ENCODE measurements at regions of chr11 and their contacts with region 1.

Region 1: GRCh38 chr11:6022956-6023355 is 7.6 kb downstream of the OR56A1 start:
- DNase-seq: peak; percentile 9 to 36 (median 29)
- H3K4me3 ChIP-seq: no peak overlapping the region
- H3K4me3 Mint-ChIP-seq: no peak overlapping the region
- H3K27ac ChIP-seq: no peak overlapping the region
- H3K27ac Mint-ChIP-seq: no peak overlapping the region
- H3K4me1 ChIP-seq: no peaks in the 10 kb centered on the region
- H3K4me1 Mint-ChIP-seq: no peaks in the 10 kb centered on the region
- H3K27me3 ChIP-seq: no peaks in the 10 kb centered on the region
- H3K27me3 Mint-ChIP-seq: peaks cover 12 to 27% of the 10 kb centered on the region in 2 donors

Region 2: GRCh38 chr11:5796541-5796940 is 226.4 kb before region 1 on chr11:
- CTCF ChIA-PET with region 1: no interaction called
- POLR2A ChIA-PET with region 1: no interaction called
- intact Hi-C with region 1: no loop called
- DNase-seq: no peak
- H3K4me3 ChIP-seq: no peak overlapping the region
- H3K4me3 Mint-ChIP-seq: no peak overlapping the region
- H3K27ac ChIP-seq: no peak overlapping the region
- H3K27ac Mint-ChIP-seq: no peak overlapping the region
- H3K4me1 ChIP-seq: no peaks in the 10 kb centered on the region
- H3K4me1 Mint-ChIP-seq: no peaks in the 10 kb centered on the region
- H3K27me3 ChIP-seq: no peaks in the 10 kb centered on the region
- H3K27me3 Mint-ChIP-seq: peaks cover 14 to 17% of the 10 kb centered on the region in 2 donors

Region 3: GRCh38 chr11:5910540-5910939 is 112.4 kb before region 1 on chr11:
- CTCF ChIA-PET with region 1: no interaction called
- POLR2A ChIA-PET with region 1: no interaction called
- intact Hi-C with region 1: no loop called
- DNase-seq: no peak
- H3K4me3 ChIP-seq: no peak overlapping the region
- H3K4me3 Mint-ChIP-seq: no peak overlapping the region
- H3K27ac ChIP-seq: no peak overlapping the region
- H3K27ac Mint-ChIP-seq: no peak overlapping the region
- H3K4me1 ChIP-seq: no peaks in the 10 kb centered on the region
- H3K4me1 Mint-ChIP-seq: no peaks in the 10 kb centered on the region
- H3K27me3 ChIP-seq: no peaks in the 10 kb centered on the region
- H3K27me3 Mint-ChIP-seq: peaks cover 10 to 12% of the 10 kb centered on the region in 2 donors

Region 4: GRCh38 chr11:6040874-6041273 is 17.9 kb after region 1 on chr11:
- CTCF ChIA-PET with region 1: no interaction called
- POLR2A ChIA-PET with region 1: no interaction called
- intact Hi-C with region 1: no loop called
- DNase-seq: no peak
- H3K4me3 ChIP-seq: no peak overlapping the region
- H3K4me3 Mint-ChIP-seq: no peak overlapping the region
- H3K27ac ChIP-seq: no peak overlapping the region
- H3K27ac Mint-ChIP-seq: no peak overlapping the region
- H3K4me1 ChIP-seq: no peaks in the 10 kb centered on the region
- H3K4me1 Mint-ChIP-seq: no peaks in the 10 kb centered on the region
- H3K27me3 ChIP-seq: no peaks in the 10 kb centered on the region
- H3K27me3 Mint-ChIP-seq: peaks cover 8 to 14% of the 10 kb centered on the region in 2 donors

Region 5: GRCh38 chr11:6315811-6316425 is 293.0 kb after region 1 on chr11:
- CTCF ChIA-PET with region 1: interaction called, 13 read pairs
- POLR2A ChIA-PET with region 1: no interaction called
- intact Hi-C with region 1: loop called (anchors 1 kb)
- DNase-seq: peak in 4 of 5 donors; percentile 9 to 12 (median 10)
- H3K4me3 ChIP-seq: no peak overlapping the region
- H3K4me3 Mint-ChIP-seq: peak overlapping the region in 1 of 8 donors; percentile 21
- H3K27ac ChIP-seq: no peak overlapping the region
- H3K27ac Mint-ChIP-seq: no peak overlapping the region
- H3K4me1 ChIP-seq: peaks cover 11% of the 10 kb centered on the region
- H3K4me1 Mint-ChIP-seq: peaks cover 3 to 18% (median 10%) of the 10 kb centered on the region in 4 donors
- H3K27me3 ChIP-seq: peaks cover 12% of the 10 kb centered on the region
- H3K27me3 Mint-ChIP-seq: peaks cover 34 to 36% of the 10 kb centered on the region in 2 donors

Region 6: DNA sequence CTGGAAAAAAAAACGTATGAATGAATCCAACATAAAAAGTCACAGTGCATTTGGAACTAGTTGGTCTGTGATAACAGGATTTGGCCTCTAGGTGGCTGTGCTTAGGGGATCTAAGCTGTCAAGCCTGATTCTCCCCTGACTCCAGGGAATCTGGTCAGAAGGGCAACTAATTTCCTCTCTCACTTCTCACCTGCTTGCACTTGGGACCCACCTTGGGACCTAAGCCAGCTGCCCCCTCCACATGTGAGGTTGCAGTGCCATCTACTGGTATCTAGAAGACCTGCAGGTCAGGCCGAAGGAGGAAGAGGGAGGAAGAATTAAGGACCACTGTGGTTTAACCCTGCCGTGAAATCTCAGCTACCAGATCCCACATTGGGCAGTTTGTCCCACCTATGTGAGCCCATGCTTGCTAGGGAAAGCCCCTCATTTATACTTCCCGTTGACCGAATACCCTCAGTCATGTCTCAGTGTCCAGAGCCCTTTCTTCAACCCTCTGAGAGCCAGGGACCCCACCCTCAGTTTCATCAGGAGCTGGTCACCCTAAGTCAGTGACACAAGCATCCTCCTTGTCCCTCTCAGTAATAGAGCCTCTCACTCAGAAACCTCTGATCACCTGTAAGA is 330.5 kb after region 1 on chr11:
- CTCF ChIA-PET with region 1: interaction called, 27 read pairs
- POLR2A ChIA-PET with region 1: no interaction called
- intact Hi-C with region 1: loop called (anchors 1 kb)
- DNase-seq: peak; percentile 46 to 63 (median 52)
- H3K4me3 ChIP-seq: no peak overlapping the region
- H3K4me3 Mint-ChIP-seq: no peak overlapping the region
- H3K27ac ChIP-seq: no peak overlapping the region
- H3K27ac Mint-ChIP-seq: peak overlapping the region in 2 of 7 donors; percentile 2 to 74
- H3K4me1 ChIP-seq: no peaks in the 10 kb centered on the region
- H3K4me1 Mint-ChIP-seq: peaks cover 0 to 4% (median 1%) of the 10 kb centered on the region in 4 donors
- H3K27me3 ChIP-seq: no peaks in the 10 kb centered on the region
- H3K27me3 Mint-ChIP-seq: peaks cover 0 to 3% of the 10 kb centered on the region in 2 donors

Region 7: DNA sequence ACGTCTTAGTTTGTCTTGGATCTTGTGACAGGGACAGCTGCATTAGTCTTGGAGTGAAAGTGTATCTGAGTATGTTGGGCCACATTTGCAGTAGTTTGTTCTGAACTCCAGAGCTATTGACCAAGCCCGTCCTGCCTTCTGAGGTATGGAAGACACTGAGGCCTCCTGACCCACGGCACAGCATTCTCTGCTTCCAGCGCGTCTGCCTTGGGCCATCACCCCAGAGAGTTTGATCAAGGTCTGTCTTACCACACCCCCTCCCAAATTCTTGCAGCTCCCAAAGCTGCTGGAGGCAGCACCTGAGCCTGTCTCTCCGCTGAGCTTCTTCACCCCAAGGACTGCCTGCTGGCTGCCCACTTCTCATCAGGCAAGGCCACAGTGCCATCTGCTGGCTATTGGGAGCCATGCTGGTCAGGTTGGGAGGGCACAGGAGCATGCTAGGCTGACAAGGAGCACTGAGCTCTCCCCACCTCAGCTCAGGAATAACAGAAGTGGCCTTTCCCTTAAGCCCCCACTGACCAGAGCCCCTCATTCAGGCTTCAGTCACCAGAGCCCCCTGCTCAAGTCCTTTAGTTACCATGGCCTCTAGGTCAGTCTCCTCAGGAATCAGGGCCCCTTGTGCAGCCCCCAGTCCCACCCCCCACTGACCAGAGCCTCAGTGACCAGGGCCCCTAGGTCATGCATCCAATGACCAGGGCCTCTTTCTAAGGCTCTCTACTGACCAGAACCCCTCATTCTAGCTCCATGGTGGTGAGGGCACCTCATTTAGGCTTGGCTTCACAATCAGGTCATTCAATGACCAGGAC is 340.1 kb after region 1 on chr11:
- CTCF ChIA-PET with region 1: interaction called, 10 read pairs
- POLR2A ChIA-PET with region 1: no interaction called
- intact Hi-C with region 1: no loop called
- DNase-seq: peak; percentile 42 to 59 (median 52)
- H3K4me3 ChIP-seq: no peak overlapping the region
- H3K4me3 Mint-ChIP-seq: no peak overlapping the region
- H3K27ac ChIP-seq: no peak overlapping the region
- H3K27ac Mint-ChIP-seq: no peak overlapping the region
- H3K4me1 ChIP-seq: no peaks in the 10 kb centered on the region
- H3K4me1 Mint-ChIP-seq: no peaks in the 10 kb centered on the region
- H3K27me3 ChIP-seq: no peaks in the 10 kb centered on the region
- H3K27me3 Mint-ChIP-seq: no peaks in the 10 kb centered on the region

Measured in CD4-positive, alpha-beta memory T cell (primary cell).